IMR-90 (cell line): ENCODE measurements at regions of chr12 and their contacts with region 1.

Region 1: DNA sequence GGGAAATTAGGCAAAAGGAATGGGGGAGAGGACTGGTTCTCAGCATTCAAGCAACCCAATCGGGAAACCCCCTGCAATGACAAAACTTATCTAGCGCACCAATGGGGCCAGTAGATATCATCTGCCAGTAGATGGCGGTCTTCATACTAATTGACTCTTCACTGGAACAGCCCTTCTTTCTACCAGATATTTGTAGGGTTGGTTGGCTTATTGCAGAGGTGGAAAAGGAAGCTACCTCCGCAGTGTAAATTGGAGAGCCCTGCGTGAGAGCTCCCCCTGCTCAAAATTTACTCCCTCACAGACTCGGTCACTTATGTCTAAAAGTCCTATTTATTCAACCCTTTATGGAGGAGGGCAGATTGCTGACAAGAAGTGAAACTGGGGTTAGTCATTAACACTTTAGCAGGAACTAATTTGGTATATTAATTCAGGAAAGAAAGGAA is 166.1 kb upstream of the CCND2 start:
- DNase-seq: peak; percentile 53
- ATAC-seq: peak; percentile 92
- H3K4me3 ChIP-seq: no peak overlapping the region
- H3K27ac ChIP-seq: no peak overlapping the region
- H3K4me1 ChIP-seq: no peaks in the 10 kb centered on the region
- H3K27me3 ChIP-seq: peaks cover 3% of the 10 kb centered on the region
- CTCF ChIP-seq: peak; percentile 67
- POLR2A ChIP-seq: no peak
- RAD21 ChIP-seq: peak; percentile 54

Region 2: GRCh38 chr12:3418609-3419390 is 688.7 kb before region 1 on chr12:
- CTCF ChIA-PET with region 1: no interaction called
- POLR2A ChIA-PET with region 1: no interaction called
- dilution Hi-C with region 1: no loop called
- in situ Hi-C with region 1: no loop called
- intact Hi-C with region 1: no loop called
- DNase-seq: no peak
- ATAC-seq: no peak
- H3K4me3 ChIP-seq: no peak overlapping the region
- H3K27ac ChIP-seq: no peak overlapping the region
- H3K4me1 ChIP-seq: no peaks in the 10 kb centered on the region
- H3K27me3 ChIP-seq: peaks cover 5% of the 10 kb centered on the region
- CTCF ChIP-seq: no peak
- POLR2A ChIP-seq: no peak
- RAD21 ChIP-seq: no peak

Region 3: DNA sequence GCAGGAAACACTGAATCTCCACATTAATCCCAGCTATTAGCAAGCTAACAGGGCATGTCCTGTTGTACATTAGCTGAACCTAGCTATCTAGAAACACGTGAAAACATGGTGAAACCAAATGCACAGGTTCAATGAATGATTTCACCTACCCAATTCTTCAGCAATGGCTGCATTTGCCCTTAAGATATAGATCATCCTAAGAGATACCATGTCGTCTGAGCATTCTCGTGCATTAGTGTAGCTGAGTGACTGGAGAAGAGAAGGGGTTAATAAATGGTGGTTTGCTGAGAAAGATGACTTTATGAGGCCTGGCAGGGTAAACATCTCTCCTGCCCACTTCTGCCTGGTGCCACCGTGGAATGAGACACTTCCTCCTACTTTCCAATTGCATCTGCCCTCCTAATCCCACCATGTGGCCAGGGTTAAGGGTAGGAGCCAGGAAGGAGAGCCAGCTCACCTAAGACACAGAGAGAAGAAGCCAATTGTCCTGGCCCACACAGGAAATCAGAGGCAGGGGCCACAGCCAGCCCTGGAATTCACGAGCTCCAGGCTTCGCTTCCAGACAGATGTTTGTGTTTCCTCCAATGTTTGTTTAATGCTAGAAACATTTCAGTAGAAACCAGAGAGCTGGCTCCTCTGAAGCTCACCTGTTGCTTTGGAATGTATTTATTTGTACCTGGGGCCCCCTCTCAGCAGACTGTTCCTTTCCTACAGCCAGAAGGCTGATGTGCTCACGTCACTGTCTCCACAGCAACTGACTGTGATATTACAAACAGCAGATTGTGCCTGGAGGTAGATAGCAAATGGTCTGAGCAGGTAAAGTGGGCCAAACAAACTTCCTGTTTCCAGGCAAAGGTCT is 108.3 kb before region 1 on chr12:
- CTCF ChIA-PET with region 1: no interaction called
- POLR2A ChIA-PET with region 1: no interaction called
- dilution Hi-C with region 1: no loop called
- in situ Hi-C with region 1: no loop called
- intact Hi-C with region 1: loop called (anchors 10 kb)
- DNase-seq: no peak
- ATAC-seq: no peak
- H3K4me3 ChIP-seq: no peak overlapping the region
- H3K27ac ChIP-seq: no peak overlapping the region
- H3K4me1 ChIP-seq: no peaks in the 10 kb centered on the region
- H3K27me3 ChIP-seq: peaks cover 9% of the 10 kb centered on the region
- CTCF ChIP-seq: no peak
- POLR2A ChIP-seq: no peak
- RAD21 ChIP-seq: no peak

Region 4: GRCh38 chr12:4118017-4118510 is 10.6 kb after region 1 on chr12:
- CTCF ChIA-PET with region 1: interaction called, 14 read pairs
- POLR2A ChIA-PET with region 1: no interaction called
- dilution Hi-C with region 1: no loop called
- in situ Hi-C with region 1: no loop called
- intact Hi-C with region 1: no loop called
- DNase-seq: peak; percentile 64
- ATAC-seq: peak; percentile 35
- H3K4me3 ChIP-seq: no peak overlapping the region
- H3K27ac ChIP-seq: no peak overlapping the region
- H3K4me1 ChIP-seq: peaks cover 17% of the 10 kb centered on the region
- H3K27me3 ChIP-seq: peaks cover 6% of the 10 kb centered on the region
- CTCF ChIP-seq: no peak
- POLR2A ChIP-seq: no peak
- RAD21 ChIP-seq: no peak

Region 5: DNA sequence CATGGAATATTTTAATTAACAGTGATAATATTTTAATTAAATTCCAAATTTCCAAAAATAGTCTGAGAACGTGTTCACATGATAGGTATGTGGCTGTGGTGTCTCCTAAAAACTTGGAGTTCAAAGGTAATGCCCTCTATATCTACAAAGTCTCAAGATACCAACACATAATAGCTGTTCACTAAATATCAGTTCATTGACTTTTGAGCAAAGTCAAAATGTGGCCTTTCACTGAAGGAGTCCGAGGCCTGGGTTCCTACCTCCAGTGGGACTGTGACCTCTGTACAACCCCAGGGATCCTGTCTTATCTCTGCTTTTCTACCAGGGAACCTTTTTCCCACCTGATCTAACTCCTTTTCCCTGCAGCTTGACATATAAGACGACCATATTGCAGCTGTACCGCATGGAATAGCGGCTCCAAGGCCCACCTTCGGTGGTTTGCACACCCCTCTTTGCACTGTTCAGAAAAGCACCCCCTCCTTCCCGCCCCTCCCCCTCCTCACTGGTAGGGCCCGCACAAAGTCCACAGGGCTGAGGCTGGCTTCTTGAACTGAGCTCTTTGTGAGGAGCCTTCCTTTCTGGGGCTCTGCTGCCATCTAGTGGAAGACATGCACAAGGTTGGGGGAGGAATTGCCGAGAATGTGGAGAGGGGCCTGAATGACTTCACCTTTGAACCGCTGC is 169.2 kb after region 1 on chr12:
- CTCF ChIA-PET with region 1: interaction called, 37 read pairs
- POLR2A ChIA-PET with region 1: interaction called, 3 read pairs
- dilution Hi-C with region 1: no loop called
- in situ Hi-C with region 1: loop called (anchors 5 kb)
- intact Hi-C with region 1: loop called (anchors 1 kb)
- DNase-seq: peak; percentile 82
- ATAC-seq: peak; percentile 77
- H3K4me3 ChIP-seq: no peak overlapping the region
- H3K27ac ChIP-seq: no peak overlapping the region
- H3K4me1 ChIP-seq: peaks cover 3% of the 10 kb centered on the region; the same call in 1 of the 2 replicates
- H3K27me3 ChIP-seq: peaks cover 47% of the 10 kb centered on the region
- CTCF ChIP-seq: peak; percentile 97
- POLR2A ChIP-seq: no peak
- RAD21 ChIP-seq: peak; percentile 95

Region 6: DNA sequence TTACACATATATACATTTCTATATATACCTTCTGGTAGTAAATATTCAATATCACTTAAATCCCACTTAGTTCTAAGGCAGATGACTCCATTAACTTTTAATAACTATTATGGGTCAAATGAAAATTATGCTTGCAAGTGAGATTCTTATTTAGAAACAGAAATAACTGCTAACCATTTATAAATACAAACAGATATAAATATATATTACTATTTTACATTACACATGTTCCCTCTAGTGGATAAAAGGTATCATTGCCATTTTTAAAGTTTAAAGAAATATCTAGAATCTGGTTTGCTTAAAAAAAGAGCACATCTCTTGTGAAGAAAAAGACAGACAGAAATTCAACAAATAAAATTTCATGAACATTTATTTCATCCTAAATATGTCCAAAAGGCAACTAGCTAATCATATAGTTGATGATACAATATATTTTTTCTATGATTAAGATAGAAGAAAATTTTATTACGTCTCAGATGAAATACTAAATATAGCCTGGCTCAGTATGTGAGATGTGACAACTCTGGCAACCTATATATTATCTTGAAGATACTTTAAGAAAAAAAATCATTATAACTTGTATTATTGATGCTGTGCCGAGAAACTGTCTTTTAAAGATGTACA is 419.6 kb after region 1 on chr12:
- CTCF ChIA-PET with region 1: no interaction called
- POLR2A ChIA-PET with region 1: no interaction called
- dilution Hi-C with region 1: no loop called
- in situ Hi-C with region 1: no loop called
- intact Hi-C with region 1: loop called (anchors 5 kb)
- DNase-seq: peak; percentile 16
- ATAC-seq: no peak
- H3K4me3 ChIP-seq: no peak overlapping the region
- H3K27ac ChIP-seq: no peak overlapping the region
- H3K4me1 ChIP-seq: no peaks in the 10 kb centered on the region
- H3K27me3 ChIP-seq: no peaks in the 10 kb centered on the region
- CTCF ChIP-seq: peak; percentile 52
- POLR2A ChIP-seq: no peak
- RAD21 ChIP-seq: peak; percentile 36